CD4-positive, alpha-beta memory T cell (primary cell): ENCODE measurements at regions of chr1 and their contacts with region 1.

Region 1: DNA sequence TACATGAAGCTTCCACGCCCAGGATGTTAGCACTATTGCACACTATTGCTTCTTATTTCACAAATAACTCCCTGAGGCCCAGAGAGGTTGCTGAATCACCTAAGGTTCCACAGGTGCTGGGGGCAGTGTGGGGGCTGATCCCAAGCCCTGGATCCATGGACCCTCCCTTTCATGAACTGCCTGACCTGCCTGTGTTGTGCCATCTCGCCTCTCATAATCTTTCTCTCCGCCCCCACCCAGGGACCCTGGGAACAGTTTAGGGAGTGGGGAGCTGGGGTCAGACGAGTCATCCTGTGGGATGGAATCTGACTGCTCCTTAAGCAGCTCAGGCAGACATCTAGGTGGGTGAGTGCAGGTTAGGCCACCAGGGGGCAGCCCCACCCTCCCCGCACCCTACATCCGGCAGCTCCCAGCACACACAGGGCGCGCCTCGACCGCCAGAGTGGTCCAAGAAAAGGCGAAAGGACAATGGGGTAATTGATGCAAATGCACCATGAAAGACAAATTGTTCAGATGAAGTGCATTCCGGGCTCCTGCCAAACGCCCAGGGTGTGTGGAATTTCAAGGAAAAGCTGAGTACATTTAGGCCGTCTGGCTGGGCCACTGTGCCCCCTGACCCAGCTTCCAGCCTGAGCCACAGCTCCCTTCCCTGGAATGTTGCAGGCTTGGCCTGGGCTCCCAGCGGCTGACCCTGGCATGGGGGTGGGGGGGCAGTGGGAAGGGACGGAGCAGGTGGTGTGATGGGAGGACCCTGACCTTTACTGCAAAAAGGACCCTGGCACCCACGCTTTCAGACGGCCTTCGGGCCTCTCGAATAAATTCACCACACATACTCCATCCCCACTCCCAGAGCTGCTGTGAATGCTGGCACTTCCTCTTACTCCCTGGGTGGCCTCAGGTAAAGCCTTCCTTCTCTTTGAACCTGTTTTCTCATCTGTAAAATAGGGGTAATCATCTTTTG is 20.8 kb downstream of the PHLDA3 start:
- DNase-seq: peak in 4 of 5 donors; percentile 29 to 53 (median 30)
- H3K4me3 ChIP-seq: no peak overlapping the region
- H3K4me3 Mint-ChIP-seq: no peak overlapping the region
- H3K27ac ChIP-seq: no peak overlapping the region
- H3K27ac Mint-ChIP-seq: peak overlapping the region in 1 of 7 donors; percentile 57
- H3K4me1 ChIP-seq: peaks cover 6% of the 10 kb centered on the region
- H3K4me1 Mint-ChIP-seq: peaks cover 0 to 4% (median 3%) of the 10 kb centered on the region in 4 donors
- H3K27me3 ChIP-seq: no peaks in the 10 kb centered on the region
- H3K27me3 Mint-ChIP-seq: peaks cover 5 to 9% of the 10 kb centered on the region in 2 donors

Region 2: DNA sequence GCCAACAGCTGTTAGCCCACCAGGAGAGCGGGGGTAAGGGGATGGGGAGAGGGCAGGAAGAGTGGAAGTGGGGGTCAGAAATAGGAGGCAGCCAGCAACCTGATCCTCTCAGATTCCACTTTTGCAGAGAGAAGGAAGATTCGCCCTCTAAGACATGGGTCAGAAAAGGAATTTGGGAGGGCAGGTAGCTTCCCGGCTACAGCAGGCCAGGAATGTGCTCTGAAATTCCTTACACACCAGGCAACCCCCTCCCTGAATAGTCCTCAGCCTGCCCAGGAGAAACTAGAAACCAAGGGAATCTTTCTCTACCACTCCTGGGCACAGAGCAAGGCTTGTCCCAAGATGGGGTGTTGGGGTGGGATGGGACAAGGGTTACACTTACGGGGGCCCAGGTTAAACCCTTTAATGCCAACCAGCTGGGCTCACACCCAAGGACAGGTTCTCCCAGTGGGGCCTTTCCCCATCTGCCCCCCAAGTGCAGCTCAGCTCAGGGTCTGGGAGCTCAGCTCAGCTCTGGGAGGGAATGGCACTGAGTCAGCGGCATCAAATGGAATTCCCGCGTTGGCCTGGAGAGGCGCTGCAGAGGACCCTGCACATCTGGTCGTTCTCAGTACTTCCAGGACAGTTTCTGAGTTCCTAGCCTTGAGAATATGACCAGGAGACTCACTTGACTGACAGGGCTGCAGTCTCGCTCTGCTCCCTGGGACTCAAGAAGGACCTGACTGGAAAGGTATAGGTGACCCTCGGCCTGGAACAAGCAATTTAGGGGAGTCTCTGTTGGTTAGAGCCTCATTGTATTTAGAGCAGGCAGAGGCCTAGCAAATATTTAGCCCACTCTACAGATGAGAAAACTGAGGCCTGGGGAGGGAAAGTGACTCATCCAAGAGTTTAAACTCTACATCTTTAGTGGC is 71.5 kb before region 1 on chr1:
- CTCF ChIA-PET with region 1: no interaction called
- POLR2A ChIA-PET with region 1: no interaction called
- intact Hi-C with region 1: no loop called
- DNase-seq: no peak
- H3K4me3 ChIP-seq: no peak overlapping the region
- H3K4me3 Mint-ChIP-seq: no peak overlapping the region
- H3K27ac ChIP-seq: no peak overlapping the region
- H3K27ac Mint-ChIP-seq: no peak overlapping the region
- H3K4me1 ChIP-seq: no peaks in the 10 kb centered on the region
- H3K4me1 Mint-ChIP-seq: no peaks in the 10 kb centered on the region
- H3K27me3 ChIP-seq: no peaks in the 10 kb centered on the region
- H3K27me3 Mint-ChIP-seq: peaks cover 2 to 23% of the 10 kb centered on the region in 2 donors

Region 3: GRCh38 chr1:201436393-201436792 is 11.8 kb before region 1 on chr1:
- CTCF ChIA-PET with region 1: interaction called, 30 read pairs
- POLR2A ChIA-PET with region 1: interaction called, 3 read pairs
- intact Hi-C with region 1: no loop called
- DNase-seq: no peak
- H3K4me3 ChIP-seq: no peak overlapping the region
- H3K4me3 Mint-ChIP-seq: no peak overlapping the region
- H3K27ac ChIP-seq: no peak overlapping the region
- H3K27ac Mint-ChIP-seq: peak overlapping the region in 2 of 7 donors; percentile 5 to 89
- H3K4me1 ChIP-seq: no peaks in the 10 kb centered on the region
- H3K4me1 Mint-ChIP-seq: peaks cover 4 to 8% (median 6%) of the 10 kb centered on the region in 4 donors
- H3K27me3 ChIP-seq: no peaks in the 10 kb centered on the region
- H3K27me3 Mint-ChIP-seq: peaks cover 9 to 14% of the 10 kb centered on the region in 2 donors

Region 4: GRCh38 chr1:201468844-201469511 is 20.8 kb after region 1 on chr1 and contains the start of gene PHLDA3:
- CTCF ChIA-PET with region 1: interaction called, 3 read pairs
- POLR2A ChIA-PET with region 1: interaction called, 3 read pairs
- intact Hi-C with region 1: loop called (anchors 2 kb)
- DNase-seq: peak in 2 of 5 donors; percentile 4 to 58
- H3K4me3 ChIP-seq: peak within 1 kb of the TSS in 1 of 2 donors; percentile 41
- H3K4me3 Mint-ChIP-seq: peak within 1 kb of the TSS; percentile 46 to 83 (median 64)
- H3K27ac ChIP-seq: no peak within 1 kb of the TSS
- H3K27ac Mint-ChIP-seq: peak within 1 kb of the TSS in 3 of 7 donors; percentile 43 to 66 (median 43)
- H3K4me1 ChIP-seq: peaks cover 7% of the 10 kb centered on the region
- H3K4me1 Mint-ChIP-seq: peaks cover 5 to 19% (median 10%) of the 10 kb centered on the region in 4 donors
- H3K27me3 ChIP-seq: no peaks in the 10 kb centered on the region
- H3K27me3 Mint-ChIP-seq: peaks cover 27 to 33% of the 10 kb centered on the region in 2 donors
- total RNA-seq, gene PHLDA3: 7.0 to 7.8 TPM

Region 5: DNA sequence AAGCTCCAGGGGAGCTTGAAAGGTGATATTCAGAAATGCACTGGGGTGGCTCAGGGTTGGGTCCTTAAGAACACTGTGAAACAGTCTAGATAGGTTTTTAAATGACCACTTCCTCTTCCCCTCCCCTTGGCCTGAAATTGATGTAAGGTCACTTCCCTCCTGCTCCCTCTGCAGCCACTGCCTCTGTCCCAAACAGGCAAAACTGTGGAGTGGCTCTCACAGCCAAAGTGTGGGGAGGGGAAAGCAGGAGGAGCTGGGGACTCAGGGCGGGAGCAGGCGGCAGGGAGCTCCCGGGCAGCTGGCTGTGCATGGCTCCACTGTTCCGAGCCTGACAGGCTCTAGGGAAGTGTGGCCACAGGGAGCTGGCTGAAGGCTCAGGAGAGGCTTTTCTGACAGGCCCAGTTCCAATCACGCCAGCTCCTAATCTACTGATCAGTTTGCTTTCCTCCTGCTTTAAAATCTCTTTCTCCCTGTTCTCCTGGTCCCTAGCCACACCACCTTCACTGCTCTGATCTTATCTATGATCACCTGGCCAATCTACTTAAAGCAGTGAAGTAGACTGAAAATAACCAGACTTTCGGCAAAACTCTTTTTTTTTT is 63.8 kb after region 1 on chr1:
- CTCF ChIA-PET with region 1: interaction called, 48 read pairs
- POLR2A ChIA-PET with region 1: interaction called, 4 read pairs
- intact Hi-C with region 1: loop called (anchors 1 kb)
- DNase-seq: no peak
- H3K4me3 ChIP-seq: no peak overlapping the region
- H3K4me3 Mint-ChIP-seq: no peak overlapping the region
- H3K27ac ChIP-seq: no peak overlapping the region
- H3K27ac Mint-ChIP-seq: peak overlapping the region in 1 of 7 donors; percentile 18
- H3K4me1 ChIP-seq: peaks cover 11% of the 10 kb centered on the region
- H3K4me1 Mint-ChIP-seq: peaks cover 13 to 24% (median 20%) of the 10 kb centered on the region in 4 donors
- H3K27me3 ChIP-seq: no peaks in the 10 kb centered on the region
- H3K27me3 Mint-ChIP-seq: no peaks in the 10 kb centered on the region